Psoas muscle (tissue), 8 donors: ENCODE measurements at regions of chr18 and their contacts with region 1.

Region 1: DNA sequence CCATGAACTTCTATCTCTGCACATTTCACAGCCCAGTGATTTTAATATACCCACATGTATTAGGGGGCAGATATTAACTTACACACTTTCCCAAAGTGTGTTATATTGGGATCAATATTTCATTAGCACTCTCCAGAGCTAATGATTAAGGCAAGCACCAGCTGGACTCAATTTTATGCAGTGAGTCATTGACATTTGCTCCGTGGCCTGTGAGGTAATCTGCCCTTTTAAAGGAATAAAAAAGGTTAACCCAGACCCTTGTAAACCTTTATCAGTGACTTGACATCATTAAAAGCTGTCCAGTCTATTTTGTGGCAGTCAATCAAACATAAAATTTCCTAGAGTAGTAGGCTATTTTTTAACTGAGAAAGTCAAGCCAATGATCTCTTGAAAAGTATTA is 1870.4 kb upstream of the CELF4 start:
- DNase-seq: no peak
- ATAC-seq: no peak
- H3K4me3 ChIP-seq: no peak overlapping the region
- H3K27ac ChIP-seq: no peak overlapping the region
- H3K4me1 ChIP-seq: no peaks in the 10 kb centered on the region
- H3K27me3 ChIP-seq: no peaks in the 10 kb centered on the region
- CTCF ChIP-seq: no peak

Region 2: GRCh38 chr18:39389800-39390379 is 46.1 kb before region 1 on chr18:
- intact Hi-C with region 1: loop called in 1 of 2 experiments (anchors 5 kb)
- DNase-seq: no peak
- ATAC-seq: no peak
- H3K4me3 ChIP-seq: no peak overlapping the region
- H3K27ac ChIP-seq: no peak overlapping the region
- H3K4me1 ChIP-seq: no peaks in the 10 kb centered on the region
- H3K27me3 ChIP-seq: no peaks in the 10 kb centered on the region
- CTCF ChIP-seq: no peak